OCI-LY7 (cell line): ENCODE measurements at regions of chr5 and their contacts with region 1.

Region 1: GRCh38 chr5:146052780-146053179 is 52.6 kb downstream of the PLAC8L1 start:
- DNase-seq: peak; percentile 8
- H3K4me3 ChIP-seq: no peak overlapping the region
- H3K27ac ChIP-seq: no peak overlapping the region
- H3K4me1 ChIP-seq: no peaks in the 10 kb centered on the region
- CTCF ChIP-seq: peak; percentile 66

Region 2: GRCh38 chr5:145681686-145682085 is 371.1 kb before region 1 on chr5:
- CTCF ChIA-PET with region 1: no interaction called
- POLR2A ChIA-PET with region 1: interaction called, 4 read pairs
- intact Hi-C with region 1: loop called (anchors 10 kb)
- DNase-seq: peak; percentile 78
- H3K4me3 ChIP-seq: no peak overlapping the region
- H3K27ac ChIP-seq: no peak overlapping the region
- H3K4me1 ChIP-seq: no peaks in the 10 kb centered on the region
- CTCF ChIP-seq: peak; percentile 89

Region 3: GRCh38 chr5:146130440-146131045 is 77.8 kb after region 1 on chr5:
- CTCF ChIA-PET with region 1: no interaction called
- POLR2A ChIA-PET with region 1: no interaction called
- intact Hi-C with region 1: loop called (anchors 5 kb)
- DNase-seq: peak; percentile 37
- H3K4me3 ChIP-seq: no peak overlapping the region
- H3K27ac ChIP-seq: no peak overlapping the region
- H3K4me1 ChIP-seq: no peaks in the 10 kb centered on the region
- CTCF ChIP-seq: peak; percentile 89

Region 4: DNA sequence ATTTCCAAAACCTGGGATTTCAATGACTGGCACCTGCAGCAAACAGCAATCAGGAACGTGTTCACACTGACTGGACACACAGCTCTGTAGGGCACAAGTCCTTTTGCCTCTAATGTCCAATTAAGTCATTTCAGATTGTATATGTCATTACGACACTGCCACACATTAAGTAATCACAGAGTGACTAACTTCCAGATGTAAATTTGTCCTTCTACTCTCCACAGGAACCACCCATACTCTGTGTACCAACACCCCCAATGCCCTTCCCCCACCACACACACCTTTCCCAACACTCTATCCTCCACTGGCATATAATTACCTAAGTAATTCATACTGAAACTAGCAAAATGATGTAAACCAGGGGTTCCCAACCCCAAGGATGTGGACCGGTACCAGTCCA is 99.2 kb after region 1 on chr5:
- CTCF ChIA-PET with region 1: no interaction called
- POLR2A ChIA-PET with region 1: no interaction called
- intact Hi-C with region 1: no loop called
- DNase-seq: no peak
- H3K4me3 ChIP-seq: no peak overlapping the region
- H3K27ac ChIP-seq: no peak overlapping the region
- H3K4me1 ChIP-seq: no peaks in the 10 kb centered on the region
- CTCF ChIP-seq: no peak